Activated CD4-positive, alpha-beta memory T cell treated with anti-CD3 and anti-CD28 coated beads for 36 hours (primary cell): ENCODE measurements at regions of chr1 and their contacts with region 1.

Region 1: DNA sequence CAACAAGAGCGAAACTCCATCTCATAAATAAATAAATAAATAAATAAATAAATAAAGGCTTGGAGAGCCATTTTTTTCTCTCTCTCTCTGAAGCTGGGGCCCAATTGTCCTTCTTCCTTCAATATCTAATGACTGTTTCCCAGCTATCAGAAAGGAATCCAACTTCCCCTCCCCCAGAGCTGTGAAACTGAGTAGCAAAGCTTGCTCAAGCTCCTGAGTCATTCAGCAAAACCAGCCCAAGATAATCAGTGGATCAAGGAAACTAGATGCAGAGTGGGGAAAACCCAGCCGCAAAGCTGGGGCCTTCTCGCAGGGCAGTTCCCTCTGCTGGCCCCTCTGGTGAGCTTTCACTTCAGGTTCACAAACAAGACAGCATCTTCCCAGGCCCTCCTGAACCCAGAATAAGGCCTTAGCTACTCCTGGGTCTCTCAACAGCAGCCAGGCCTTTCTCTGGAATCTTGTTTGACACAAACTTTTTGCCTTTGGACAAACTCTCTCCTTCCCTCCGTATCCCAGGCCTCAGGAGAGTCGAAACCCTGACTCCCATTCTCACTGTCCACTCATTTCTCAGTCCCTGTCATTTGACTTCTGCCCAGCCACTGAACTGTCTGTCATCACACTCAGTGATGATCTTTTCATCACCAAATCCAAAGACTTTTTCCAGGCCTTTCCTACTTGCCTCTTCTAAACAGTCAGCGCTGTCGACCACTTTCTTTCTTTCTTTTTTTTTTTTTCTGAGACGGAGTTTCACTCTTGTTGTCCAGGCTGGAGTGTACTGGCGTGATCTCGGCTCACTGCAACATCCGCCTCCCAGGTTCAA is 18.0 kb upstream of the PTP4A2 start:
- DNase-seq: peak; percentile 94
- H3K4me3 Mint-ChIP-seq: peak overlapping the region; percentile 55
- H3K27ac Mint-ChIP-seq: peak overlapping the region; percentile 90
- H3K4me1 Mint-ChIP-seq: peaks cover 59% of the 10 kb centered on the region
- H3K27me3 Mint-ChIP-seq: no peaks in the 10 kb centered on the region

Region 2: GRCh38 chr1:31815752-31816500 is 140.2 kb before region 1 on chr1 and contains the start of gene SPOCD1:
- CTCF ChIA-PET with region 1: interaction called, 120 read pairs
- POLR2A ChIA-PET with region 1: interaction called, 3 read pairs
- intact Hi-C with region 1: no loop called
- DNase-seq: peak; percentile 93
- H3K4me3 Mint-ChIP-seq: peak within 1 kb of the TSS; percentile 48
- H3K27ac Mint-ChIP-seq: peak within 1 kb of the TSS; percentile 14
- H3K4me1 Mint-ChIP-seq: peaks cover 7% of the 10 kb centered on the region
- H3K27me3 Mint-ChIP-seq: no peaks in the 10 kb centered on the region
- total RNA-seq, gene SPOCD1: 0.73 to 0.78 TPM

Region 3: GRCh38 chr1:31880890-31881687 is 75.0 kb before region 1 on chr1:
- CTCF ChIA-PET with region 1: no interaction called
- POLR2A ChIA-PET with region 1: no interaction called
- intact Hi-C with region 1: no loop called
- DNase-seq: no peak
- H3K4me3 Mint-ChIP-seq: no peak overlapping the region
- H3K27ac Mint-ChIP-seq: no peak overlapping the region
- H3K4me1 Mint-ChIP-seq: no peaks in the 10 kb centered on the region
- H3K27me3 Mint-ChIP-seq: no peaks in the 10 kb centered on the region

Region 4: GRCh38 chr1:31891280-31891679 is 64.8 kb before region 1 on chr1:
- CTCF ChIA-PET with region 1: interaction called, 5 read pairs
- POLR2A ChIA-PET with region 1: interaction called, 8 read pairs
- intact Hi-C with region 1: loop called (anchors 1 kb)
- DNase-seq: peak; percentile 78
- H3K4me3 Mint-ChIP-seq: no peak overlapping the region
- H3K27ac Mint-ChIP-seq: peak overlapping the region; percentile 73
- H3K4me1 Mint-ChIP-seq: peaks cover 35% of the 10 kb centered on the region
- H3K27me3 Mint-ChIP-seq: no peaks in the 10 kb centered on the region

Region 5: GRCh38 chr1:31931593-31932225 is 24.4 kb before region 1 on chr1:
- CTCF ChIA-PET with region 1: interaction called, 487 read pairs
- POLR2A ChIA-PET with region 1: interaction called, 13 read pairs
- intact Hi-C with region 1: loop called (anchors 1 kb)
- DNase-seq: no peak
- H3K4me3 Mint-ChIP-seq: peak overlapping the region; percentile 41
- H3K27ac Mint-ChIP-seq: peak overlapping the region; percentile 96
- H3K4me1 Mint-ChIP-seq: peaks cover 89% of the 10 kb centered on the region
- H3K27me3 Mint-ChIP-seq: no peaks in the 10 kb centered on the region

Region 6: GRCh38 chr1:31944205-31945089 is 11.7 kb before region 1 on chr1:
- CTCF ChIA-PET with region 1: interaction called, 487 read pairs
- POLR2A ChIA-PET with region 1: interaction called, 130 read pairs
- intact Hi-C with region 1: loop called (anchors 1 kb)
- DNase-seq: peak; percentile 89
- H3K4me3 Mint-ChIP-seq: peak overlapping the region; percentile 76
- H3K27ac Mint-ChIP-seq: peak overlapping the region; percentile 91
- H3K4me1 Mint-ChIP-seq: peaks cover 51% of the 10 kb centered on the region
- H3K27me3 Mint-ChIP-seq: no peaks in the 10 kb centered on the region